Caco-2 (cell line): ENCODE measurements at regions of chr1 and their contacts with region 1.

Region 1: DNA sequence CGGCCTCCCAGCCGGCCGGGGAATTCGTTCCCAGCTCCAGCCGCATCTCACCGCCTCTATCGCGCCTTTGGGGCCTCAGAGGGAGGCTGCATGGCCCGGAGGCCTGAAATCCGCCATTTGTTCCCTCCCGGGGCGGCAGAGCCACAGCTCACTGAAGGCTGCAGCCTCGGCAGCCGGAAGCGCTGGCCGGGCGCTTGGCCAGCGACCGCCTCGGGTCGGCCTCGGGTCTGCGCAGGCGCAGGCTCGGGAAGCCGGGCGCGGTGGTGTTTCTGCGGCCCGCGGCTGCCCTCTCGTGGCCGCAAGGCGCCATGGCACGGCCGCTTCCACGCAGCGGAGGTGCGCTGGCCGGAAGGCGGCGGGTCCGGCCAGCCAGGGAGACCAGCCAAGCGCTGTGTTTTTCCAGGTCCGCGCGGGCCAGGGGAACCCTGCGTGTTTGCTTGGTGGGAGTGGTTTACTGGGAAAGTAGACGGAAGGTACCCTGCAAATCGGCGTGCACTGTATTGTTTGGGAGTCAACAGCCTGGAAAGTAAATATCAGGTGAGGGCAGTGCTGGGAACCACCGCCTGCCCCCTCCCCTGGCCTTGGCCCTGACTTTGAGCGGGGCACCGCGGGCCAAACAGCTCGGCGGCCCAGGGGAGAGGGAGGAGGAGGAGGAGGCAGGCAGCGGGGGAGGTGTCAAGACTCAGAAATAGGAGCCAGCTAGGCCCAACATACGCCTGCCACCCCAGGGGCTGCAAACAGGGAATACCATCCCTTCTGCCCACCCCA is 52.7 kb upstream of the CD34 start:
- DNase-seq: peak; percentile 77 to 93
- H3K4me3 ChIP-seq: peak overlapping the region; percentile 61
- H3K4me3 Mint-ChIP-seq: peak overlapping the region; percentile 58
- H3K27ac Mint-ChIP-seq: peak overlapping the region; percentile 12
- H3K4me1 ChIP-seq: peaks cover 10% of the 10 kb centered on the region; the same call in 1 of the 2 replicates
- H3K4me1 Mint-ChIP-seq: no peaks in the 10 kb centered on the region
- H3K27me3 ChIP-seq: no peaks in the 10 kb centered on the region
- H3K27me3 Mint-ChIP-seq: peaks cover 6% of the 10 kb centered on the region
- CTCF ChIP-seq: peak; percentile 89 to 97

Region 2: DNA sequence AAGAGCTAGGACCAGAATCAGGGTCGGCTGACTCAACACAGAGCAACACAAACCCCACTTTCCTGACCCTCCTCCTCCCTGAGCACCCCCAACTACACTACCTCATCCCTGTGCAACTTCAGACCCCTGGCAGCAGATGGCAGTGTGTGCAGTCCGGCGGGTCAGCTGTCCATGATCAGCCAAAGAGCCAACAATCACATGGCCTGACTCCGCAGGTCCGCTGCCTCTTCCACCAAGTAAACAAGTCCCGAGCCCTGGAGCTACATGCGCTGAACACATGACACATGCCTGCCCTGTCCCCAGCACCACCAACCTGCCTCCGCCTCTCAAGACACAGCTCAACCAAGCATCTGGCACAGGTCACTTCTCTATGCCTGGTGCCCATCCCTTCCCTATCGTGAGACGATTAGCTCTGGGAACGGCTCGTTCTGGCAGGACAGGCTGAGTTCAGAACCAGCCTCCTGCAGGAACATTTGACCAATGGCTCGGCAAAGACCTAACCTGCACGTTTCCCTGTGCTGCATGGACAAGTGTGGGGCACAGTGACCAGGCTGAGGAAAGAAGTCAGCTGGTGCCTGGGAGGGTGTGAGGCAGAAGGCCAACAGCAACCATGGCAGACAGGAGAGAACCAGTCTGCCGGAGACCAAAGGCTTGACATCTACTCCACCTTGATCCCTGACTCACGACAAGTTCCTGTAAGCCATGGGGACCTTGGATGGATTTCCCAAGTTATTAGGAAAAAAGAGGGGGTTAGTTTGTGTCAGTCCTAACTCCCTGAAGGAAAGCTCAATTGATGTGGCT is 151.5 kb before region 1 on chr1:
- CTCF ChIA-PET with region 1: interaction called, 3 read pairs
- POLR2A ChIA-PET with region 1: no interaction called
- intact Hi-C with region 1: loop called (anchors 1 kb)
- DNase-seq: peak; percentile 68 to 70
- H3K4me3 ChIP-seq: no peak overlapping the region
- H3K4me3 Mint-ChIP-seq: no peak overlapping the region
- H3K27ac Mint-ChIP-seq: peak overlapping the region; percentile 76
- H3K4me1 ChIP-seq: no peaks in the 10 kb centered on the region
- H3K4me1 Mint-ChIP-seq: peaks cover 25% of the 10 kb centered on the region
- H3K27me3 ChIP-seq: no peaks in the 10 kb centered on the region
- H3K27me3 Mint-ChIP-seq: no peaks in the 10 kb centered on the region
- CTCF ChIP-seq: peak; percentile 15 to 65

Region 3: GRCh38 chr1:207868774-207869721 is 94.6 kb before region 1 on chr1:
- CTCF ChIA-PET with region 1: interaction called, 13 read pairs
- POLR2A ChIA-PET with region 1: no interaction called
- intact Hi-C with region 1: no loop called
- DNase-seq: peak; percentile 64 to 86
- H3K4me3 ChIP-seq: peak overlapping the region; percentile 72
- H3K4me3 Mint-ChIP-seq: peak overlapping the region; percentile 75
- H3K27ac Mint-ChIP-seq: peak overlapping the region; percentile 82
- H3K4me1 ChIP-seq: peaks cover 49% of the 10 kb centered on the region
- H3K4me1 Mint-ChIP-seq: peaks cover 50% of the 10 kb centered on the region
- H3K27me3 ChIP-seq: no peaks in the 10 kb centered on the region
- H3K27me3 Mint-ChIP-seq: no peaks in the 10 kb centered on the region
- CTCF ChIP-seq: peak; percentile 72 to 77

Region 4: DNA sequence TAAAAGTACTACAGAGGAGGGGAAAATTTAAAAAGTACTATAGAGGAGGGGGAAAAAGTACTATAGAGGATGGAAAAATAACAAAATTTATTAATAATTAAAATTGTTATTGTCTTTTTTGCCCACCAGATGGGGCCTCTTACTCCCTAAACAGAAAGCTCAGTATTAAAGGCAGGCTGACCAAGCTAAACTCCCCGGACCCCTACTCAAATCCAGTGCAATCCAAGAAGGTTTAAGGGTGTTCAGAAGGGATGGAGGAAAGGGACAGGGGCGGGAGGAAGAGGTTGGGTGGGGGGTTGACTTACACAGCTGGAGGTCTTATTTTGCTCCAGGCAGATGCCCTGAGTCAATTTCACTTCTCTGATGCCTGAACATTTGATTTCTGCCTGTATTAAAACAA is 66.4 kb before region 1 on chr1:
- CTCF ChIA-PET with region 1: interaction called, 54 read pairs
- POLR2A ChIA-PET with region 1: no interaction called
- intact Hi-C with region 1: loop called (anchors 1 kb)
- DNase-seq: no peak
- H3K4me3 ChIP-seq: no peak overlapping the region
- H3K4me3 Mint-ChIP-seq: no peak overlapping the region
- H3K27ac Mint-ChIP-seq: no peak overlapping the region
- H3K4me1 ChIP-seq: no peaks in the 10 kb centered on the region
- H3K4me1 Mint-ChIP-seq: no peaks in the 10 kb centered on the region
- H3K27me3 ChIP-seq: no peaks in the 10 kb centered on the region
- H3K27me3 Mint-ChIP-seq: no peaks in the 10 kb centered on the region
- CTCF ChIP-seq: peak; percentile 23 to 47

Region 5: DNA sequence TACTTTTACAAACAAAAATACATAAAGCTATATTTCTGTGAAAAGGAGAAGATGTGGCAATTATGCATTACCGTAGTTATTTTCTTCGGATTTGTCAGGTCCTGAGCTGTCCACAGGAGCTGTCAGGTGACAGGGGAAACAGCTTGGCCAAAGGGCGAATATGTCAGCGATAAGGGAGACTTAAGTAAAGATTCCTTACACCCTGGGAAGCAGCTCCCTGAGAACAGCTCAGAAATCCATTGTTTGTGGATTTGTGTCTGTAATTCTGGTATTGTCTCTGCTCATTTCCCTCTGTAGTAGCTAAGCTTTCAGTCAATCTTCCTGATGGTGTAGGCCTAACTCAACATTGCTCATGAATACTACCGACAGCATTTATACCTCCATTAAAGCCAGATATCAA is 45.6 kb before region 1 on chr1:
- CTCF ChIA-PET with region 1: interaction called, 20 read pairs
- POLR2A ChIA-PET with region 1: interaction called, 4 read pairs
- intact Hi-C with region 1: no loop called
- DNase-seq: peak; percentile 74 to 80
- H3K4me3 ChIP-seq: peak overlapping the region; percentile 13
- H3K4me3 Mint-ChIP-seq: peak overlapping the region; percentile 61
- H3K27ac Mint-ChIP-seq: peak overlapping the region; percentile 93
- H3K4me1 ChIP-seq: peaks cover 15% of the 10 kb centered on the region
- H3K4me1 Mint-ChIP-seq: peaks cover 22% of the 10 kb centered on the region
- H3K27me3 ChIP-seq: no peaks in the 10 kb centered on the region
- H3K27me3 Mint-ChIP-seq: no peaks in the 10 kb centered on the region
- CTCF ChIP-seq: no peak

Region 6: GRCh38 chr1:207997486-207998268 is 34.1 kb after region 1 on chr1:
- CTCF ChIA-PET with region 1: interaction called, 10 read pairs
- POLR2A ChIA-PET with region 1: no interaction called
- intact Hi-C with region 1: no loop called
- DNase-seq: peak; percentile 63 to 70
- H3K4me3 ChIP-seq: no peak overlapping the region
- H3K4me3 Mint-ChIP-seq: no peak overlapping the region
- H3K27ac Mint-ChIP-seq: no peak overlapping the region
- H3K4me1 ChIP-seq: no peaks in the 10 kb centered on the region
- H3K4me1 Mint-ChIP-seq: no peaks in the 10 kb centered on the region
- H3K27me3 ChIP-seq: no peaks in the 10 kb centered on the region; the same call in 1 of the 2 replicates
- H3K27me3 Mint-ChIP-seq: peaks cover 17% of the 10 kb centered on the region
- CTCF ChIP-seq: peak; percentile 84 to 91